ENCODE measurements at regions of chr14 and their contacts with region 1.

Region 1: DNA sequence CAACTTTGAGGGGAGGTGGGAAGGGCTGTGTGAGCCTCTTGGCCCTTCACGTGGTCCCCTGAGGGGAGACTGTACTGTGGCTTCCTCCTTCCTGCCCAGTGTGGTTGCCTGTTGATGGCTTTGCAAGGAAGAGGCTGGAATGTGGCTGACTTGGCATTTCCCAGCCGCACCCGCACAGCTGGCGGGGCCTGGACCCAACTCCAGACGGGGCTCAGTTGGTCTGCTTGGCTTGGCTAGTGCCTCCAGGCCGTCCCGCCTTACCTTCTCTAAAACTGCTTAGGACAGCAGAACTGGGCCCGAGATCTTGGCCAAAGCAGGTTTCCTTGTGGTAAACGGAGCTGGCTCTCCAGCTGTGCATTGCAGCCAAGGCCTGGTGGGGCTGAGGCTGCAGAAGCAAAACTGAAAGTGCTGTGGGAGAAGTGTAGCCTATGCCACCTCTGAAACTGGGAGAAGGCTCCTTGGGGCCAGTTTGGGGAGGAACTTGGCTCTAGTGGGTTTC is 139.5 kb downstream of the SMOC1 start:
- DNase-seq: peak; percentile 47
- ATAC-seq: peak; percentile 64
- H3K4me3 ChIP-seq: no peak overlapping the region
- H3K27ac ChIP-seq: no peak overlapping the region
- H3K4me1 ChIP-seq: peaks cover 6% of the 10 kb centered on the region
- H3K27me3 ChIP-seq: no peaks in the 10 kb centered on the region
- CTCF ChIP-seq: no peak
- POLR2A ChIP-seq: no peak
- RAD21 ChIP-seq: no peak

Region 2: GRCh38 chr14:69879175-69880043 is 139.4 kb before region 1 on chr14 and contains the start of gene SMOC1:
- CTCF ChIA-PET with region 1: interaction called, 7 read pairs
- POLR2A ChIA-PET with region 1: no interaction called
- dilution Hi-C with region 1: no loop called
- in situ Hi-C with region 1: loop called (anchors 5 kb)
- intact Hi-C with region 1: no loop called
- DNase-seq: peak; percentile 79
- ATAC-seq: peak; percentile 88
- H3K4me3 ChIP-seq: peak within 1 kb of the TSS; percentile 78
- H3K27ac ChIP-seq: peak within 1 kb of the TSS; percentile 27; the same call in 1 of the 2 replicates
- H3K4me1 ChIP-seq: peaks cover 7% of the 10 kb centered on the region
- H3K27me3 ChIP-seq: 0 out of 2 replicates have a peak, but pooled peaks cover 2% of the 10 kb centered on the region
- CTCF ChIP-seq: 0 out of 2 replicates have a peak, but pooled peaks have one; percentile 8
- POLR2A ChIP-seq: peak; percentile 92
- RAD21 ChIP-seq: 0 out of 2 replicates have a peak, but pooled peaks have one; percentile 11
- total RNA-seq, gene SMOC1: 0.90 and 1.1 TPM in 2 replicates